ENCODE measurements at regions of chr14 and their contacts with region 1.

Region 1: DNA sequence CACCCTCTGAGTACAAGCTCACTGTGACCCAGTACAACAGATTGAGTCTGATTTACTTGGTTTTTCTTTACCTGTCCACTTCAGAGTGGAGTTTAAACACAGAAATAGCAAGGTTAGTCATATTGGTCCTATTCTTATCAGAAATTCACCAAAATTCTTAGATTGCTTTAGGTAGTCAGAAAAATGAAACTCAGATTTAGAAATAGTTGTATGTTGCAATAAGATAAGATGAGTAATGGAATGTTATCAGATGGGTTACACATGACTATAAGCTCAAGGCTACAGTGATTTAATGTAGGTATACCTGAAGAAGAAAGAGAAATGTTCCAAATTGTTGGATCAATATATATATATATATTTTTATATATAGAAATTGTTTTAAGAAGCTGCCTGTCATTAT is 524.1 kb downstream of the LRFN5 start:
- DNase-seq: no peak
- H3K4me3 ChIP-seq: no peak overlapping the region
- H3K27ac ChIP-seq: no peak overlapping the region
- H3K4me1 ChIP-seq: no peaks in the 10 kb centered on the region
- H3K27me3 ChIP-seq: no peaks in the 10 kb centered on the region
- CTCF ChIP-seq: no peak
- POLR2A ChIP-seq: no peak

Region 2: DNA sequence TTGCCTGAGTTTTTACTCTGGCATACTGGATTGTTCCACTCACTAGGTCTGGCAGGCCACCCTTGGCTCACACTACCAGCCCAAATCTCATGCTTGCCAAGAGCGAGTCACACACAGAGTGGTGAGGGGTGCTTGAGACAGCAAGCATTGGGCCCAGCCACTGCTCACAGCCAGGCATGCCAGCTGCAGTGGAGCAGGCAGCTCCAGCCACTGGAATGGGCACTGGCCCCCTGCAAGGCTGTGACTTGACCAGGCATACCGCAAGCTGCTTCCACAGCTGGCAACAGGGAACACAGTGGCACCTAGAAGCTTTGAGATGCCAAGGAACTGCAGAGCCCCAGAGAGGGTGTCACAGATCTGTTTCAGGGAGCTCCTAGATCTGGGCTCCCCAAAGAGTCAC is 35.7 kb before region 1 on chr14:
- intact Hi-C with region 1: no loop called
- DNase-seq: no peak
- H3K4me3 ChIP-seq: no peak overlapping the region
- H3K27ac ChIP-seq: no peak overlapping the region
- H3K4me1 ChIP-seq: no peaks in the 10 kb centered on the region
- H3K27me3 ChIP-seq: no peaks in the 10 kb centered on the region
- CTCF ChIP-seq: no peak
- POLR2A ChIP-seq: no peak

Region 3: DNA sequence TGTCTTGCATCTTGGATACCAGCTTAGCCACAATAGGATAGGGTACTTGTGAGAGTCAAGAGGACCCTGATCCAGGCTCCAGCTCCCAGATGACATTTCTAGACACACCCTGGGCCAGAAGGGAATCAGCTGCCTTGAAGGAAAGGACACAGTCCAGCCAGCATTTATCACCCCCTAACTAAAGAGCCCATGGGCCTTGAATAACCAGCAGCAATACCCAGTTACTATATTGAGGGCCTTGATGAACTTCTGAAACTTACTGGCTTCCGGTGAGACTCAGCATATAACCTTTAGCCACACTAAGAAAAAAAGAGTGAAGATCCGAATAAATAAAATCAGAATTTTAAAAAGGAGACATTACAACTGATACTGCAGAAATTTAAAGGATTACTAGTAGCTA is 611.3 kb after region 1 on chr14:
- intact Hi-C with region 1: loop called (anchors 5 kb)
- DNase-seq: no peak
- H3K4me3 ChIP-seq: no peak overlapping the region
- H3K27ac ChIP-seq: no peak overlapping the region
- H3K4me1 ChIP-seq: no peaks in the 10 kb centered on the region
- H3K27me3 ChIP-seq: no peaks in the 10 kb centered on the region
- CTCF ChIP-seq: no peak
- POLR2A ChIP-seq: no peak

Measured in breast epithelium (tissue), 4 donors.